GM12878 (cell line): ENCODE measurements at regions of chr5 and their contacts with region 1.

Region 1: DNA sequence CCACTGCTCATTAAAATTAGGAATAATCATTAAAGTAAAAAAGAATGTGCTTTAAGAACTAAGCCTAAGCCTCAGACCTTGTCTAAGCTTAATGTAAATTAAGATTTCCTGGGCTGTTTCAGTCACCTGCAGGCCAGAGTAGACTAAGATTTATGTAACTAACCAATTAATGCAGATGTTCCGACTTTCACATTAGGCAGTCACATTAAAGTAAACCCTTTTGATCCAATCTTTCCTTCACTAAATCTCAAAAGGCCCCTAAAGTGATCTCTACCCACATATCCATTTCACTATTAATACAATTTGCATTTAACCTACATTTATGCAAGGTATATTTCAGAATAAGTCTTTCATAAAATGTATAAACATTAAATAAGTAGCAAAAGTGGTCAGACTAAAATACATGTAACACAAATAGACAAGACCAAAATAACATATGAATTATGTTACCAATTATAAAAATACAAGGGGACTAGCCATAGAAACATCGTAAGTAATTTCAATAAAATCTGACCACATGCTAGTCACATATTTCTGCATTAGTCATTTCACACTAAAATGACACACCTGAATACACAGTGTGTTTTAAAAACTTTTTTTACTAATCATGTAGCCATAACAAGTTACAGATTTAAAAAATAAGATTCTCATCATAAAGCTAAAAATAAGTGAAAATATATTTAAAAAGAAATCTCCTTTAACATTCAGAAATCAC is 7.7 kb downstream of the NR3C1 start:
- DNase-seq: no peak
- ATAC-seq: peak; percentile 17
- H3K4me3 ChIP-seq: peak overlapping the region; percentile 83
- H3K27ac ChIP-seq: peak overlapping the region; percentile 93
- H3K4me1 ChIP-seq: no peaks in the 10 kb centered on the region
- H3K27me3 ChIP-seq: no peaks in the 10 kb centered on the region
- CTCF ChIP-seq: no peak
- EP300 ChIP-seq: peak; percentile 24 to 31; a peak in 1 of 4 replicates
- POLR2A ChIP-seq: no peak
- RAD21 ChIP-seq: no peak

Region 2: GRCh38 chr5:142353071-142353472 is 1042.7 kb before region 1 on chr5:
- CTCF ChIA-PET with region 1: no interaction called
- POLR2A ChIA-PET with region 1: no interaction called
- RAD21 ChIA-PET with region 1: no interaction called
- SMC1A ChIA-PET with region 1: no interaction called
- in situ Hi-C with region 1: no loop called
- intact Hi-C with region 1: no loop called
- DNase-seq: no peak
- ATAC-seq: no peak
- H3K4me3 ChIP-seq: no peak overlapping the region
- H3K27ac ChIP-seq: no peak overlapping the region
- H3K4me1 ChIP-seq: peaks cover 3% of the 10 kb centered on the region
- H3K27me3 ChIP-seq: no peaks in the 10 kb centered on the region
- CTCF ChIP-seq: no peak
- EP300 ChIP-seq: no peak
- POLR2A ChIP-seq: no peak
- RAD21 ChIP-seq: no peak

Region 3: DNA sequence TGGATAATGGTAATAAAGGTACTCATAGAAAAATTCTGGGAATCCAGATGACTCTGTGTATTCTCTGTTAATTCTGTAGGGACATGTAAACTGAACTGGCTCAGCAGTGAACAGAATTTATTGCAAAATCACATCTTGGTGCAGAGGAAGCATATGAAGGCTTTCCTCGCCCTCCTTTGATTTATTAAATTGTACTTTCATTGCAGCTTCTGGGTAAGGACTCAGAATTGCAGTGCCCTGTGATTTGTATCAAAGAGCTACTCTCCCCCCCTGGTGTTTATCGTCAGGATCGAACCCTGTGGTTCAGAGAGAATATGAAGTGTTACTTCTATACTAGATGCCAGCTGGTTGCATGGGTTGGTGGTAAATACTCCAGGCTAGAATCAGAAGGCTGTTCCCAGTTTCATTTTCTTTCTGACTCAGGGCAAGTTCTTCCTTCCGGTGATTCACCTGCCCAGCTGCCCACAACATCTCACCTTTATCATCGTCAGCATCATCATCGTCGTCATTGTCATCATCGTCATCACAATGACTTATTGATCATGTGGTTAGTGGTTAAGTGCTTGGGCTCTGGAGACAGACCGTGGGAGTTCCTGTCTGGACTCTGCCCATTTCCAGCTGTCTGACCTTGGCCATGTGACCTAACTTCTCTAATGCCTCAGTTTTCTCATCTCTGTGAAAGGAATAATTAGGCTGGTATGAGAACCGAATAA is 386.8 kb before region 1 on chr5:
- CTCF ChIA-PET with region 1: interaction called, 10 read pairs
- POLR2A ChIA-PET with region 1: interaction called, 3 read pairs
- RAD21 ChIA-PET with region 1: interaction called, 19 read pairs
- SMC1A ChIA-PET with region 1: interaction called, 20 read pairs
- in situ Hi-C with region 1: no loop called
- intact Hi-C with region 1: no loop called
- DNase-seq: peak; percentile 98
- ATAC-seq: peak; percentile 90
- H3K4me3 ChIP-seq: no peak overlapping the region
- H3K27ac ChIP-seq: peak overlapping the region; percentile 47; the same call in 1 of the 2 replicates
- H3K4me1 ChIP-seq: peaks cover 27% of the 10 kb centered on the region
- H3K27me3 ChIP-seq: no peaks in the 10 kb centered on the region
- CTCF ChIP-seq: peak; percentile 13 to 25 (median 25); a peak in 2 of 6 replicates
- EP300 ChIP-seq: peak; percentile 100
- POLR2A ChIP-seq: no peak
- RAD21 ChIP-seq: 0 out of 2 replicates have a peak, but pooled peaks have one; percentile 30

Region 4: DNA sequence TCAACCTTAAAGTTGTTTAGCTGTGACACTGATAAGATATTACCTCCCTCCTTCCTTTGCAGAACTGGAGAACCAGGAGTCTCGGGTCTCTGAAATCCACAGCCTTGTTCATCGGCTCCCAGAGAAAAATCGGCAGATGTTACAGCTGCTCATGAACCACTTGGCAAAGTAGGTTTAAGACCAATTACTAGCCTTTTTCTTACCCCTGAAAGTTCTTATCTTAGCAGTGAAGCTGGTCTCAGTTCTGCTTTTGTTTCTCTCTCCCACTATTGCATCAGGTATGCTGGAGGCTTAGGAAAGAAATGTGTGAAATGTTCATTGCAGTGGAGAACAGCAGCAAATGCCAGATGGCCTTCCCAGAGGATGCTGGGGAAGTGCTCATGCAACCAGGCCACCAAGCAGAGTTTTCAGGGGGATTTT is 338.2 kb before region 1 on chr5:
- CTCF ChIA-PET with region 1: interaction called, 3 read pairs
- POLR2A ChIA-PET with region 1: interaction called, 5 read pairs
- RAD21 ChIA-PET with region 1: interaction called, 5 read pairs
- SMC1A ChIA-PET with region 1: interaction called, 4 read pairs
- in situ Hi-C with region 1: no loop called
- intact Hi-C with region 1: loop called (anchors 2 kb)
- DNase-seq: peak; percentile 85
- ATAC-seq: peak; percentile 59
- H3K4me3 ChIP-seq: peak overlapping the region; percentile 77
- H3K27ac ChIP-seq: peak overlapping the region; percentile 100
- H3K4me1 ChIP-seq: peaks cover 56% of the 10 kb centered on the region
- H3K27me3 ChIP-seq: no peaks in the 10 kb centered on the region
- CTCF ChIP-seq: no peak
- EP300 ChIP-seq: peak; percentile 77 to 89; a peak in 3 of 4 replicates
- POLR2A ChIP-seq: peak; percentile 54; the same call in 1 of the 2 replicates
- RAD21 ChIP-seq: peak; percentile 36; the same call in 1 of the 2 replicates

Region 5: DNA sequence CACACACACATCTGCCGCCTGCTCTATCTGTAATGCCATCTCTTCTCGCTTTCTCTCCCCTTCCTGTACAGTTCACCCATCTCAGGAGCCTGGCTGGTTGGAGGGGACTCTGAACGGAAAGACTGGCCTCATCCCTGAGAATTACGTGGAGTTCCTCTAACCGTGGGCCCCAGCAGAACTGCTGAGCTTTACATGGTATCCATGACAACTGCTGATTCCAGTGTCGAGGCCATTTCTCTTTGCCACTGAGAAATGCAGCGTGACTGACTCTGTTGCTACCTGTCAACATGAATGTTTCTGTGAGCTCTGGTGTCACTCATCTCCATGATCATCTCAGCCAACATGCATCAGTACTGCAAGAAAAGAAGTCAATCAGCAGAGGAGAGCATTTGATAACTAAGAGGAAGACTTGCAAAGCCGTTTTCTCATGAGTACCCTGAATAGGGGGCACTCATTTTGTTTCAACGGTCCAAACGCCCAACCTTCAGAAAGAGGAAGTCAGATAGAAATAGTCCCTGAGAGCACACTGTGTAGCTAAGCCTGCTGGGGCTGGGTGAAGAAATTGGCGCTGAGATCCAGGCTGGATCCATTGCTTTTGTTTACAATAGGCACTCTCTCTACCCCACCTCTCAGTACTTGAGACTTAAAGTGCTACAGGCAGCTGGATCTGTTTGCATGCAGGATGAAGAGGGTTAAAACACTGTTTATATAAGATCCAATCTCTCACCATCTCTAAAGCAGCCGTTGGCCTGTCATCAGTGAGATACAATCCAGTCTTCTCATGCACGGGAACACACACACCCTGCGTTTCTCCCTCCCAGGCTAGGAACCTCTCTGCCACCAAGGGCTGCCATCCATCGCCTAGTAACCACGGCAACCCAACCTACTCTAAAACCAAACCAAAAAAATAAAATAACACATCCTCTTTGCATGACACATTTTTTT is 173.2 kb before region 1 on chr5:
- CTCF ChIA-PET with region 1: interaction called, 5 read pairs
- POLR2A ChIA-PET with region 1: interaction called, 6 read pairs
- RAD21 ChIA-PET with region 1: interaction called, 121 read pairs
- SMC1A ChIA-PET with region 1: interaction called, 53 read pairs
- in situ Hi-C with region 1: loop called (anchors 5 kb)
- intact Hi-C with region 1: no loop called
- DNase-seq: peak; percentile 82
- ATAC-seq: peak; percentile 70
- H3K4me3 ChIP-seq: no peak overlapping the region
- H3K27ac ChIP-seq: peak overlapping the region; percentile 100
- H3K4me1 ChIP-seq: peaks cover 60% of the 10 kb centered on the region
- H3K27me3 ChIP-seq: no peaks in the 10 kb centered on the region
- CTCF ChIP-seq: no peak
- EP300 ChIP-seq: 0 out of 4 replicates have a peak, but pooled peaks of 1 of the 2 experiments have one; percentile 50
- POLR2A ChIP-seq: peak; percentile 50; the same call in 1 of the 2 replicates
- RAD21 ChIP-seq: no peak; the same call in 1 of the 2 replicates

Region 6: DNA sequence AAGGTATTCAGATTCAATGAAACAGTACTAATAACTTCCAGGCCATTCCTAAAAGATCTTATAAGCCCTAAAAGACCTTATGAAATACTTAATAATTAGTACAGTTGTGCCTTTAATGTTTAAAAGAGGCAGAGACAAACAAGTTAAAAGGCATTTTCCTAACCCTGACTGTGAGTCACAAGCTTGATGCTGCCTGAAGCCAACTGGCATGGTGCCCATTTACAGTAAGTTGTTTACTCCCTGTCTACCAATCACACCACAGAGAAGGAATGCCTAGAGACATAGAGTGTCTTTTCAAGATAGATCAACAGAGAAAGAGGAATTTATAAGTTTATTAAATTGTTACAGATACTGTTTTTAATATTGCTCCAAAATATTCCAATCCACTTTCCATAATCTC is 40.1 kb before region 1 on chr5:
- CTCF ChIA-PET with region 1: interaction called, 4 read pairs
- POLR2A ChIA-PET with region 1: interaction called, 4 read pairs
- RAD21 ChIA-PET with region 1: interaction called, 10 read pairs
- SMC1A ChIA-PET with region 1: interaction called, 29 read pairs
- in situ Hi-C with region 1: no loop called
- intact Hi-C with region 1: loop called (anchors 2 kb)
- DNase-seq: no peak
- ATAC-seq: peak; percentile 25; the same call in 2 of the 3 replicates
- H3K4me3 ChIP-seq: no peak overlapping the region
- H3K27ac ChIP-seq: no peak overlapping the region
- H3K4me1 ChIP-seq: peaks cover 54% of the 10 kb centered on the region
- H3K27me3 ChIP-seq: no peaks in the 10 kb centered on the region
- CTCF ChIP-seq: no peak
- EP300 ChIP-seq: no peak
- POLR2A ChIP-seq: no peak
- RAD21 ChIP-seq: no peak

Region 7: DNA sequence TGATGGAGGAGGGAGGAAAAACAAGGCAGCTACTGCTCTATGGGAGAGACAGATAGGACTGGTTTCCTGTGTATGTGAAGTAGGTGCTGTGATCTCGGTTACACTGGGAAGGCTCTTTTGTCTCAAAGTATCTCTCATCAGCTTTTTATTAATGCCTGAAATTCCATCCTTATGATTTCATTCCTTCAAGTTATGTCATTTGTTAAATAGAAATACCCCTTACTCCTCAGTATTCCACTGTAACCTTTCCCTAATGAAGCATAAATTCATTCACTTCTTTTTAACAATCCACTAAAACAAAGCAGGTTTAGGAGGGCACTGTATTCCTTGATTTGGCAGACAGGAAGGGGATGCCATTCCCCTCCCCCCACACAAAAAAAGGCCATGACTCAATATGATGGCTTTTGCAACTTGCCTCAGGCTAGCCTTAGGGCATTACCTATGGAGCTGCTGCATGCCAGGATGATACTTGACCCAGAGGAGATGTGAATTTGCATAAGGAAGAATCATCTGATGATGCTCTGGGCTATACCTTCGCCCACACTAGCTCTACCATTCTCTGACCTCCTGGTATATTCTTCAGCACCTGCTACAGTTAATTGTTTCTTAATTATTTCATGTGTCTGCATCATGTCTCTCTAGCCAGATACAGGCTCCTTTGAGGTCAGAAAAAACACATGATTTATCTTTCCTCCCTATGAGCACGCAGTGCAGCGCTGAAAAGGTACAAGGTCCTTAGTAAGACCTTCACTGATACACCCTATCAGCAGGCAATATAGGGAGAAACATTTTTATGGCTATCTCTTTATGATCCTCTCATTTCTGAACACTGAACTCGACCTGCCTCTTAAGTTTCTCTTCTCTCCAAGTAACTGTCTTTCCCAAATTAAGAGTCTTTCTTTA is 18.6 kb before region 1 on chr5:
- CTCF ChIA-PET with region 1: no interaction called
- POLR2A ChIA-PET with region 1: interaction called, 3 read pairs
- RAD21 ChIA-PET with region 1: interaction called, 12 read pairs
- SMC1A ChIA-PET with region 1: interaction called, 17 read pairs
- in situ Hi-C with region 1: no loop called
- intact Hi-C with region 1: no loop called
- DNase-seq: no peak
- ATAC-seq: peak; percentile 30
- H3K4me3 ChIP-seq: no peak overlapping the region
- H3K27ac ChIP-seq: no peak overlapping the region
- H3K4me1 ChIP-seq: peaks cover 9% of the 10 kb centered on the region; the same call in 1 of the 2 replicates
- H3K27me3 ChIP-seq: no peaks in the 10 kb centered on the region
- CTCF ChIP-seq: no peak
- EP300 ChIP-seq: no peak
- POLR2A ChIP-seq: peak; percentile 50; the same call in 1 of the 2 replicates
- RAD21 ChIP-seq: no peak

Region 8: DNA sequence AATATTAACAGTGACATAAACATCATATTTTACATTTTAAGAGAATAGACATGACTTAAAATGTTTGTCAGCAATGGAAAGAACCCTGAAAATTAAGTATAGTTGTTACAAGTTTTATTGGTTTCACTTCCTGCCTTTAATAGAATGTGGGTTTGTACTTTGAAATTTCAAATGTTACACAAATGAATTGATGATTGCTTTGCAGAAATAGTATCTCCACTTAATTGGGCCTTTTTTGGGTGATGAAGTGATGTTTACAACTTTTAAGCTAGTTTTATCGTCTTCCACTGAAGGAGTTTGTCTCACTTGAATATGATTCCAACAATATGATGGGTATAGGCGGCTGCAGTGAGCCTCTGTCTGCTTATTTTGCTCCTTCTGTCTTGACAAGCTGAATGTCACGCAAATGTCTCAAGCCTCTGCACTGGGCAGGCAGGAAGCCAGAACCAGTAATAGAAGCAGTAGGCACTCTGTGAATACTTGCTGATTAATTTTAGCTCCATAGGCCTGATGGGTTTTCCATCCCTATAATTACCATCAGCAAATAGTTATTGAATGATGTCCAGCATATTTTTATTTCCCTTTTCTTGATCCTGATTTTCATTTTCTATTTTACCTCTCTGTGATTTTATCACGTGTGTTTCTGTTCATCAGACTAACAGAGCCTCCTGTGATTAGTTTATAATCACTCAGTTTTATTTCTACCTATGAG is 18.3 kb after region 1 on chr5:
- CTCF ChIA-PET with region 1: interaction called, 7 read pairs
- POLR2A ChIA-PET with region 1: interaction called, 4 read pairs
- RAD21 ChIA-PET with region 1: interaction called, 13 read pairs
- SMC1A ChIA-PET with region 1: interaction called, 10 read pairs
- in situ Hi-C with region 1: no loop called
- intact Hi-C with region 1: no loop called
- DNase-seq: no peak
- ATAC-seq: peak; percentile 71
- H3K4me3 ChIP-seq: peak overlapping the region; percentile 16; the same call in 1 of the 2 replicates
- H3K27ac ChIP-seq: peak overlapping the region; percentile 76
- H3K4me1 ChIP-seq: peaks cover 43% of the 10 kb centered on the region
- H3K27me3 ChIP-seq: no peaks in the 10 kb centered on the region
- CTCF ChIP-seq: no peak
- EP300 ChIP-seq: peak; percentile 21 to 63; a peak in 2 of 4 replicates
- POLR2A ChIP-seq: no peak
- RAD21 ChIP-seq: no peak

Region 9: GRCh38 chr5:143491644-143492043 is 95.8 kb after region 1 on chr5:
- CTCF ChIA-PET with region 1: no interaction called
- POLR2A ChIA-PET with region 1: no interaction called
- RAD21 ChIA-PET with region 1: no interaction called
- SMC1A ChIA-PET with region 1: no interaction called
- in situ Hi-C with region 1: no loop called
- intact Hi-C with region 1: no loop called
- DNase-seq: no peak
- ATAC-seq: no peak
- H3K4me3 ChIP-seq: no peak overlapping the region
- H3K27ac ChIP-seq: no peak overlapping the region
- H3K4me1 ChIP-seq: no peaks in the 10 kb centered on the region
- H3K27me3 ChIP-seq: no peaks in the 10 kb centered on the region
- CTCF ChIP-seq: no peak
- EP300 ChIP-seq: no peak
- POLR2A ChIP-seq: no peak
- RAD21 ChIP-seq: no peak

Region 10: DNA sequence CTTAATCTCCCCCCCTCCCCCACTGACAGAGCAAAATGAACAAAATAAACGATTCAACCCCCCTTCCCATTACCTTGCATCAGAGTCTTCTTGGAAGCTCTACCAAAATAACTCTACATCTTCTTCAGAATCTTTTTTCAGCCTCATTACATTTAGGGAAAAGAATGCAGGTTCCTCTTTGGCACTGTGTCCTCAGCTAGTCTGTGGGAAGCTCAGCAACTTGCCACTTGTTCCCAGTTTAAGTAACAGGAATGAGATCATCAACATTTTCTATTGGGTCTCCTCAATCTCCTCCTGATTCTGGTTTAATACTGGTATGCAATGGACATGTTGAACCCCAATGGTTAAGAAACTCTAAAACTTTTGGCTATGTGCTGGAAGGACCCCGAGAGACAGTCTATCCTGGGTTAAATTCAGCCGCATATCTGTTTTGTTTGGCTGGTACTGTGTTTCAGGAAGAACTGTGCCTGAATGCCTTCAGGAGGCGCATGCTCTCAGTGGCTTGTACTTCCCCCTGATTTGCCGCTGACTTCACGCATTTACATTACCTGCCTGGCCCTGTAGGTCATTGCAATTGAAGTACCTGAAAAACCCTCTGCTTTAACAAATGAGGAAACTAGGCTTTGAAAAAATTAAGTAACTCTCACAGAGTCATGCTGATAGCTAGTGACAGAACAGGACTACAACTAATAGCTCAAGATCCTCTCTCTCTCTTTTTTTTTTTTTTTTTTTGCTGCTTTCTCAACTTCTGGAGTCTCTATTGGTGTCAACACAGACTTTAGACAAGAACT is 338.1 kb after region 1 on chr5:
- CTCF ChIA-PET with region 1: no interaction called
- POLR2A ChIA-PET with region 1: no interaction called
- RAD21 ChIA-PET with region 1: no interaction called
- SMC1A ChIA-PET with region 1: no interaction called
- in situ Hi-C with region 1: no loop called
- intact Hi-C with region 1: no loop called
- DNase-seq: no peak
- ATAC-seq: no peak
- H3K4me3 ChIP-seq: no peak overlapping the region
- H3K27ac ChIP-seq: no peak overlapping the region
- H3K4me1 ChIP-seq: no peaks in the 10 kb centered on the region
- H3K27me3 ChIP-seq: no peaks in the 10 kb centered on the region
- CTCF ChIP-seq: no peak
- EP300 ChIP-seq: no peak
- POLR2A ChIP-seq: no peak
- RAD21 ChIP-seq: no peak